K562 (cell line): ENCODE measurements at regions of chr3 and their contacts with region 1.

Region 1: GRCh38 chr3:138180375-138181029 is 5.8 kb upstream of the DBR1 start:
- DNase-seq: peak in 2 of 4 experiments; percentile 28 to 56
- ATAC-seq: peak; percentile 92
- H3K4me3 ChIP-seq: no peak overlapping the region
- H3K27ac ChIP-seq: no peak overlapping the region
- H3K4me1 ChIP-seq: no peaks in the 10 kb centered on the region; a peak in 1 of 5 replicates
- H3K27me3 ChIP-seq: no peaks in the 10 kb centered on the region
- CTCF ChIP-seq: peak; percentile 52 to 80 (median 55)
- EP300 ChIP-seq: no peak; the same call in 1 of the 2 replicates
- POLR2A ChIP-seq: no peak
- RAD21 ChIP-seq: peak; percentile 81 to 88

Region 2: GRCh38 chr3:138271189-138271794 is 90.8 kb after region 1 on chr3:
- CTCF ChIA-PET with region 1: interaction called, 4 read pairs
- POLR2A ChIA-PET with region 1: no interaction called
- in situ Hi-C with region 1: no loop called
- intact Hi-C with region 1: loop called (anchors 5 kb)
- DNase-seq: no peak
- ATAC-seq: no peak
- H3K4me3 ChIP-seq: no peak overlapping the region
- H3K27ac ChIP-seq: no peak overlapping the region
- H3K4me1 ChIP-seq: no peaks in the 10 kb centered on the region
- H3K27me3 ChIP-seq: no peaks in the 10 kb centered on the region
- CTCF ChIP-seq: no peak
- EP300 ChIP-seq: no peak
- POLR2A ChIP-seq: no peak
- RAD21 ChIP-seq: no peak

Region 3: GRCh38 chr3:138314751-138315150 is 134.2 kb after region 1 on chr3:
- CTCF ChIA-PET with region 1: no interaction called
- POLR2A ChIA-PET with region 1: no interaction called
- in situ Hi-C with region 1: no loop called
- intact Hi-C with region 1: no loop called
- DNase-seq: no peak
- ATAC-seq: no peak
- H3K4me3 ChIP-seq: no peak overlapping the region
- H3K27ac ChIP-seq: no peak overlapping the region
- H3K4me1 ChIP-seq: no peaks in the 10 kb centered on the region; a peak in 1 of 5 replicates
- H3K27me3 ChIP-seq: peaks cover 4 to 11% of the 10 kb centered on the region in 2 experiments; a peak in 2 of 5 replicates
- CTCF ChIP-seq: no peak
- EP300 ChIP-seq: no peak
- POLR2A ChIP-seq: no peak
- RAD21 ChIP-seq: no peak

Region 4: DNA sequence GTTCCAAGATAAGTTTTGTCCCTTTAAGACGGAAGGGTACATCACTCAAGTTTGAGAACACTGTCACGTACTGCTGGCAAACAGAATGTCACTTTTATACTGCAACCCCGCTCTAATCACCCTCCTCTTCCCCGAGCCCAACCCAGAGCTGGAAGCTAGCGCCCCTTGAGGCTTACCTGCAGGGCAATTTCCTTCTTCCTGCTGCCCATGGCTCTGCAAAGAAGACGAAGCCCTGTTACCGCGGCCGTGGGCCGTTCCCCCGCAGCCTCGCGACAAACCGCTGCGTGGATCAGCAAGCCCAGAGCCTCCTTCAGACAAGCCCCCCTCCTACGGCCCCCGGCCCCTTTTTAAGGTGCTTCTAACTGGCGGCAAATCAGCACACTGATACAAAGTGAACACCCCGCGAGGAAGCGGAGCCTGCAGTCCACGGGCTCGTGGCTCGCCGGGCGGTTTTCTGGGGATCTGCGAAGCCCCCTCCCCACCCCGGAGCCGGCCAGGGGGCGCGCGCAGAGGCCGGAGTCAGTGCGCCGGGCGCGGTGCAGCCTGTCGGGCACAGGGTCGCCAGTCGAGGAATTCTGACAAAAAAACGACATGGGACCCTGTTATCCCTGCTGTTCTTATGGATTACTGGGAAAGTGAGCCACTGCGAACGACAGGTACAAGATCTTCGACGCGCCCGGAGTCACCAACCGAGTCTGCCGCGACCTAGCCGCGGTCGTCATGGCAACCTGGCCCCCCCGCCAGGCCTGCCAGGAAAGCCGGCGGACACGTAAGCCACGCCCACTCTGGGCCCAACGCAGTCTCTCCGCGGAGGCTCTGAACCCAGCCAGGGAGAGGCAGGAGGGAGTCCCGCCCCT is 148.9 kb after region 1 on chr3 and contains the start of gene NME9:
- CTCF ChIA-PET with region 1: no interaction called
- POLR2A ChIA-PET with region 1: no interaction called
- in situ Hi-C with region 1: no loop called
- intact Hi-C with region 1: loop called (anchors 1 kb)
- DNase-seq: peak; percentile 86 to 95 (median 92)
- ATAC-seq: peak; percentile 94
- H3K4me3 ChIP-seq: peak within 1 kb of the TSS; percentile 57
- H3K27ac ChIP-seq: no peak within 1 kb of the TSS
- H3K4me1 ChIP-seq: peaks cover 7 to 10% of the 10 kb centered on the region in 2 experiments; a peak in 4 of 5 replicates
- H3K27me3 ChIP-seq: no peaks in the 10 kb centered on the region; a peak in 1 of 5 replicates
- CTCF ChIP-seq: peak; percentile 59 to 72 (median 69)
- EP300 ChIP-seq: no peak
- POLR2A ChIP-seq: no peak
- RAD21 ChIP-seq: peak in 1 of 2 experiments; percentile 47; a peak in 2 of 4 replicates
- polyA plus RNA-seq, gene NME9: 0.13 to 0.15 TPM

Region 5: GRCh38 chr3:138347960-138348753 is 167.7 kb after region 1 on chr3 and contains the start of gene MRAS:
- CTCF ChIA-PET with region 1: interaction called, 4 read pairs
- POLR2A ChIA-PET with region 1: no interaction called
- in situ Hi-C with region 1: no loop called
- intact Hi-C with region 1: loop called (anchors 5 kb)
- DNase-seq: peak; percentile 60 to 73 (median 70)
- ATAC-seq: peak; percentile 89
- H3K4me3 ChIP-seq: peak within 1 kb of the TSS; percentile 55
- H3K27ac ChIP-seq: peak within 1 kb of the TSS; percentile 41; the same call in 2 of the 3 replicates
- H3K4me1 ChIP-seq: peaks cover 7 to 12% of the 10 kb centered on the region in 2 experiments; a peak in 3 of 5 replicates
- H3K27me3 ChIP-seq: no peaks in the 10 kb centered on the region
- CTCF ChIP-seq: peak; percentile 40 to 61 (median 40); a peak in 5 of 6 replicates
- EP300 ChIP-seq: no peak
- POLR2A ChIP-seq: no peak
- RAD21 ChIP-seq: peak; percentile 31 to 45; a peak in 3 of 4 replicates
- polyA plus RNA-seq, gene MRAS: 1.5 to 2.0 TPM

Region 6: DNA sequence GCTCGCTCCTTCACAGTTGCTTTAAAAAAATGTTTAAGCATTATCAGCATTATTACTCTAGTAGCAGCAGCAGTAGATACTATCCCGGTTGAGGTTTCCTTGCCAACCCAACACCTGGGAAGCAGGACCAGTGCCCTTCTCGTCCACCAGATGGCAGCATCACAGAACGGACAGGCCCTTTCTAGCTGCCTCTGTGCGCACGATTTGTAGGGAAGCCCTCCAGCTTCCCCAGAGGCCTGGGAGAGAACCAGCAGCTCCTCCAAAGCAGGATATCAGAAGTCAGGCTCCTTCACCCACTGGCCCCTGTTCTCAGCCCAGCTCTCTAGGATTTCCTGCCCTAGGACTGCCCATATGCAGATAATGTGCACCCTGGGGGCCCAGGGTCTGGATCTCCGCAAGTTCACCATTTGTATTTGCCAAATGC is 237.1 kb after region 1 on chr3:
- CTCF ChIA-PET with region 1: no interaction called
- POLR2A ChIA-PET with region 1: no interaction called
- in situ Hi-C with region 1: no loop called
- intact Hi-C with region 1: loop called (anchors 2 kb)
- DNase-seq: peak; percentile 67 to 79 (median 70)
- ATAC-seq: peak; percentile 98
- H3K4me3 ChIP-seq: no peak overlapping the region
- H3K27ac ChIP-seq: no peak overlapping the region
- H3K4me1 ChIP-seq: no peaks in the 10 kb centered on the region; a peak in 1 of 5 replicates
- H3K27me3 ChIP-seq: no peaks in the 10 kb centered on the region
- CTCF ChIP-seq: peak; percentile 87 to 96 (median 88)
- EP300 ChIP-seq: no peak
- POLR2A ChIP-seq: no peak
- RAD21 ChIP-seq: peak; percentile 72 to 88